Activated naive CD8-positive, alpha-beta T cell treated with anti-CD3 and anti-CD28 coated beads, Interleukin-2, amount 10 ng/mL, durations not matched to agents 7 days and 5 days (primary cell): ENCODE measurements at regions of chr11 and their contacts with region 1.

Region 1: GRCh38 chr11:85752890-85753581 is 57.9 kb downstream of the SYTL2 start:
- DNase-seq: peak; percentile 73
- ATAC-seq: peak; percentile 82
- H3K4me3 Mint-ChIP-seq: peak overlapping the region; percentile 65
- H3K27ac Mint-ChIP-seq: peak overlapping the region; percentile 92
- H3K4me1 Mint-ChIP-seq: peaks cover 72% of the 10 kb centered on the region
- H3K27me3 Mint-ChIP-seq: no peaks in the 10 kb centered on the region

Region 2: DNA sequence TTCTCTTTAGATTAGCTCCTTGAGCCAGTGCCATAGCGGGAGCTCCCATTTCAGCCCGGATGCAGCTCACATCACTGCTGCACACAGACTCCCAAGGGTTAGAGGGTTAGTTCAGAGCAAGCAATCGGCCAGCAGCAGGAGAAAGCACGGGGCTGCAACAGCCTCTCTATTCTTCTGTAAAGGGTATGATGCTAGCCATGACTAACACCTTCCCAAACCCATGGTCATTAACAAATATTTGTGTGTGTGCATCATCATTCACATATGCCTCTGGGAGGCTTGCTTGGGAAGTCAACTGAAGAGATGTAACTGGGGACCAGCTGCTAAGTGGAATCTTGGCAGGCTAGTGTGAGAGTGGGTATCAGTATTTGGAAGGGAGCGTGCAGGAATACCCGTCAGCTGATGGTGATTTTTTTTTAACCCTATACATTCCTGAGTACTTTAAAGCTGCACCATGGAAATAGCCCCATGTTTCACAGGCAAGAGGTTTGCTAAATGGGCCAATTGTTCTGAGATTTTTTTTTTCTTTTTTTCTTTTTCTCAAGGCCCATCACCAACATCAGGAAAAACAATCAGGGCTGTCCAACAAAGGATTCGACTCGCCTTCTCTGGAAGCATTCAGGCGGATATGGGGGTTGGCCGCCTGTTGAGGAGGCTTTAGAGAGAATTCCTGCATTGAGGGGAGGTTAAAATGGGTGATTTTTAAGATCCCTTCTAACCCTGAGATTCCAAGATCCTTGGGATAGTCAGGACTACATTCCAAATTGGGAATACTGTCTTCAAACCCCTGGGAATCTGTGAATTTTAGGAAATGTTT is 33.8 kb before region 1 on chr11:
- POLR2A ChIA-PET with region 1: no interaction called
- DNase-seq: no peak
- ATAC-seq: no peak
- H3K4me3 Mint-ChIP-seq: no peak overlapping the region
- H3K27ac Mint-ChIP-seq: no peak overlapping the region
- H3K4me1 Mint-ChIP-seq: no peaks in the 10 kb centered on the region
- H3K27me3 Mint-ChIP-seq: no peaks in the 10 kb centered on the region

Region 3: DNA sequence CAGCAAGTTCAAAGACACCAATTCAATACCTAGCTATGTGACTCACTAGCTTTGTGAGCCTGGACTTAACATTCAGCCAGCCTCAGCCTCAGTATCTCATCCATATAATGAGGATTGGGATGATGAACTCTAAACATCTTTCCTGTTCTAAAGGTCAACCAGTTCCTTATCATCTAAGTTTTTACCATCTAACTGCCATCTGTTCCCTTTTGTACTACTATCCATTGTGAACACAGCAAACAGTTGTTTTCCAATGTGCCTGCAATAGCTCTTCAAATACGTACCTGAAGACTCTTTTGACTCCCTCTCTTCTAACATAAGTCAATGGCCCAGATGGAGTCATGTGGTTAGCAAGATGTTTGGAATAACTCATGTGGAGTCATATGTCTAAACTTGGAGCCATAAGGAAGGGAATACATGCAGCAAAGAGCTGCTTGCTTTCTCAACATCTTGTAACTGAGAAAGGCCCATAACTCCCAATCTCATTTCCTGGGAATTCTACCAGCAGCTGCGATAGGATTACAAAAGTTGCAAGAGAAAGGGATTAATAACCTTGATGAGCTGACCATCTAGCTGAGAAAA is 38.5 kb after region 1 on chr11:
- POLR2A ChIA-PET with region 1: no interaction called
- DNase-seq: no peak
- ATAC-seq: no peak
- H3K4me3 Mint-ChIP-seq: no peak overlapping the region
- H3K27ac Mint-ChIP-seq: no peak overlapping the region
- H3K4me1 Mint-ChIP-seq: peaks cover 16% of the 10 kb centered on the region
- H3K27me3 Mint-ChIP-seq: no peaks in the 10 kb centered on the region

Region 4: DNA sequence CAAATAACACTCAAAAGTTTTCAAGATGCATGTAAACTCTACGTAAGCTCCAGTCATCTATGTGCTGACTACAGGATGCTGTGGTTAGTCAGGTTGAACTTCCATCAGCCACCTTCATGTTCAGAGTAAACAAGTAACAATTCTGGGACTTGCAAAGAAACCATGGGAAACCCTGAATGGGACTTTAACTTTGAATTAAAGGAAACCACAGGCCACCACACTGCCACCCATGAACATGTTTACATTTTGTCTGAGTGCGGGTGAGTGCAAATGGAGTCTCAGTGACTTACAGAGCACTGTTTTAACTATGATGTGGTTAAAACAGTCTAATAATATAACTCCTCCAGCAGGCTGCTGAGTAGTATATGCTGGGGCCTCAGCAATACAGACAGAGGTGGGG is 70.8 kb after region 1 on chr11:
- POLR2A ChIA-PET with region 1: interaction called, 11 read pairs
- DNase-seq: peak; percentile 52
- ATAC-seq: peak; percentile 92
- H3K4me3 Mint-ChIP-seq: peak overlapping the region; percentile 73
- H3K27ac Mint-ChIP-seq: peak overlapping the region; percentile 88
- H3K4me1 Mint-ChIP-seq: peaks cover 45% of the 10 kb centered on the region
- H3K27me3 Mint-ChIP-seq: peaks cover 4% of the 10 kb centered on the region